BJ (cell line): ENCODE measurements at regions of chr15 and their contacts with region 1.

Region 1: GRCh38 chr15:68469162-68470048 is 37.4 kb upstream of the ITGA11 start:
- DNase-seq: peak; percentile 19
- H3K4me3 ChIP-seq: no peak overlapping the region
- H3K27me3 ChIP-seq: peaks cover 6% of the 10 kb centered on the region
- CTCF ChIP-seq: no peak

Region 2: GRCh38 chr15:68479406-68479805 is 10.0 kb after region 1 on chr15:
- CTCF ChIA-PET with region 1: interaction called, 10 read pairs
- POLR2A ChIA-PET with region 1: no interaction called
- DNase-seq: peak; percentile 78
- H3K4me3 ChIP-seq: no peak overlapping the region
- H3K27me3 ChIP-seq: 0 out of 2 replicates have a peak, but pooled peaks cover 11% of the 10 kb centered on the region
- CTCF ChIP-seq: no peak